ENCODE measurements at regions of chr12 and their contacts with region 1.

Region 1: GRCh38 chr12:109934026-109934425 is 34.0 kb downstream of the TCHP start:
- DNase-seq: no peak
- ATAC-seq: peak; percentile 74
- H3K4me3 ChIP-seq: no peak overlapping the region
- H3K27ac ChIP-seq: no peak overlapping the region
- H3K4me1 ChIP-seq: no peaks in the 10 kb centered on the region
- H3K27me3 ChIP-seq: no peaks in the 10 kb centered on the region
- CTCF ChIP-seq: peak; percentile 48 to 63 (median 56); a peak in 5 of 6 replicates
- POLR2A ChIP-seq: no peak
- RAD21 ChIP-seq: peak; percentile 68

Region 2: DNA sequence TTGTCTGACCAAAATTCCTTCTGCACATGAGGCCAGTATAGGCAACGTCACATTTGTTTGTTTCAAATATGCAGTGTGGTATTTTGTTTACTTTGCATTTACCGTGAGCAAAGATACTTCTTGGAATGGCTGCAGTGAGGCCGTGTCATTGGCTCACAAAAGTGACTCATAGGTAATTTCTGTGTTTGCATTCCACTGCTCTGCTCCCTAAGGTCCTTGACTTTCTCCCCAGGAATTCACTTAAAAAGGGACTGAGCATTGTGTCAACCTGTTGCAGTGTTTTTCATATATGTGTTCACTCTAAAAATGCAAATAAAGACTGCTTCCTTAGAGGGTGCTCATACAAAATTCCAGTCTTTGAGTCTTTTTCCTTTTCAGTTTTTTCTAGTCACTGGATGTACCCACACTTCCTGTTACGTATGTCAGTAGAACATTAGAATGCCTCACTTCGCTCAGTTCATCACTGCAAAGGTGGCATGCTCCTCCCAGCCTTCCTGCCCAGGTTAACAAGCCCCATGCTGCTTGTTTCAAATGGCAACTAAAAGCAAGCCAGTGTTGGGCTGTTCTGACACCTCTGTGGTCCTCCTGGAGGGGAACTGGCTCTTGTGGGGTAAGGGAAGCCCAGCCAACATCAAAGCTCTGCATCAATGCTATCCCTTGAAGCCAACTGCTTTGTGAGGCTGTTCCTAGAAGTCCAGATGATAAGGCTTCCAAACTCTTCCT is 105.2 kb after region 1 on chr12:
- CTCF ChIA-PET with region 1: no interaction called
- POLR2A ChIA-PET with region 1: no interaction called
- RAD21 ChIA-PET with region 1: no interaction called
- intact Hi-C with region 1: loop called (anchors 1 kb)
- DNase-seq: no peak
- ATAC-seq: peak; percentile 68
- H3K4me3 ChIP-seq: no peak overlapping the region
- H3K27ac ChIP-seq: peak overlapping the region; percentile 35; the same call in 1 of the 2 replicates
- H3K4me1 ChIP-seq: peaks cover 12 to 19% of the 10 kb centered on the region in 2 experiments
- H3K27me3 ChIP-seq: no peaks in the 10 kb centered on the region
- CTCF ChIP-seq: no peak
- POLR2A ChIP-seq: no peak
- RAD21 ChIP-seq: no peak

Measured in HCT116 (cell line).